Activated CD4-positive, alpha-beta T cell treated with anti-CD3 and anti-CD28 coated beads, Interleukin-2, amount 10 ng/mL, durations not matched to agents 24 days and 14 days (primary cell): ENCODE measurements at regions of chr5 and their contacts with region 1.

Region 1: DNA sequence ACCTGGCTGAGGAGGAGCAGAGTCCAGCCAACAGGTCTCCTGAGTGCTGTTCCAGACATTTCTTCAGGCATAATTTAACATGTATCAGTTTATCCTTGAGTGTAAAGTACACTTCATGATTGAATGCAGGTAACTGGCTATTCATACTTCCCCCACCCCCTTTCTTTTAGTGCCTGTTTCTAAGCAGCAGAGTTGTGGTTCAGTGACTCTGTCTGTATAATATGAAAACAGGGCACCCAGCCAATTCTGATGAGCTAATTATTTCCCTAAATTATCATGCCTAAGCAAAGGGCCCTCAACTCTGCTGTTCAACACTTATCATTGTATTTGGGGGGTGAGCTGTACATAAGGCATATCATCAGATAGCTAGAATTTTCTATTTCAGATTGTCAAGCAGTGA is 51.9 kb upstream of the ZSWIM6 start:
- DNase-seq: peak; percentile 60
- H3K4me3 Mint-ChIP-seq: no peak overlapping the region
- H3K27ac Mint-ChIP-seq: no peak overlapping the region
- H3K4me1 Mint-ChIP-seq: peaks cover 24% of the 10 kb centered on the region
- H3K27me3 Mint-ChIP-seq: no peaks in the 10 kb centered on the region

Region 2: DNA sequence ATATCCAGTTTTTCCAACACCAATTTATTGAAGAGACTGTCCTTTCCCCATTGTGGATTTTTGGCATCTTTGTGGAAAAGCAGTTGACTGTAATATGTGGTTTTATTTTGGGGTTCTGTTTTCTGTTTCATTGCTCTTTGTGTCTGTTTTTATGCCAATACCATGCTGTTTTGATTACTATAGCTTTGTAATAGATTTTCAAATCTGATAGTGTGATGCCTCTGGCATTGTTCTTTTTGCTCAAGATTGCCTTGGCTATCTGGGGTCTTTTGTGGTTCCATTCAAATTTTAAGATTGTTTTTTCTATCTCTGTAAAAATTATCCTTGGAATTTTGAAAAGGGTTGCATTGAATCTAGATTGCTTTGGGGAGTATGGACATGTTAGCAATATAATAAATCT is 235.7 kb before region 1 on chr5:
- intact Hi-C with region 1: loop called (anchors 2 kb)
- DNase-seq: no peak
- H3K4me3 Mint-ChIP-seq: no peak overlapping the region
- H3K27ac Mint-ChIP-seq: no peak overlapping the region
- H3K4me1 Mint-ChIP-seq: peaks cover 4% of the 10 kb centered on the region
- H3K27me3 Mint-ChIP-seq: no peaks in the 10 kb centered on the region

Region 3: DNA sequence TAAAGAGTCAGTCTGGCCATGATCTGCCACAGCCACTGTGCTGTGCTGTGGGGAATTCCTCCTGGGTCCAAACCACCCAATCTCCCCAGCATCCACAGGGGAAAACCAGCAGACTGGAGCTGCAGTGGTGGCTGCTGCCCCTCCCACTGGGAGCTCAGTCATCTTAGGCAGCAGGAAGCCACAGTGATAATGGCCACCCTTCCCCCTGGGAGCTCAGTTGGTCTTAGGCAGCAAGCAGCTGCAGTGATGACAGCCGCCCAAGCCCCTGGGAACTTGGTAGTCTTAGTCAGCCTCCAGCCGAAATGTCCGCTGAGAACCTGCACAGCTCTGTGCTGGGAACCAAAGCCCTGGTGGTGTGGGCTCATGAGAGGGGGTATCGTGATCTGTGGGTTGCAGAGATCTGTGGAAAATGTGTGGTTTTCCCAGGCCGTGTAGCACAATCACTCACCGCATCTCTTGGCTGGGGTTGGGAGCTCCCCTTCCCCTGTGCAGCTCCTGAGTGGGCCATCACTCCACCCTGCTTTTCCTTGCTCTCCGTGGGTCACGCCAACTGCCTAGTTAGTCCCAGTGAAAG is 79.5 kb before region 1 on chr5:
- intact Hi-C with region 1: loop called (anchors 5 kb)
- DNase-seq: no peak
- H3K4me3 Mint-ChIP-seq: no peak overlapping the region
- H3K27ac Mint-ChIP-seq: no peak overlapping the region
- H3K4me1 Mint-ChIP-seq: peaks cover 6% of the 10 kb centered on the region
- H3K27me3 Mint-ChIP-seq: peaks cover 10% of the 10 kb centered on the region

Region 4: GRCh38 chr5:61215996-61216395 is 64.2 kb before region 1 on chr5:
- intact Hi-C with region 1: no loop called
- DNase-seq: no peak
- H3K4me3 Mint-ChIP-seq: no peak overlapping the region
- H3K27ac Mint-ChIP-seq: no peak overlapping the region
- H3K4me1 Mint-ChIP-seq: no peaks in the 10 kb centered on the region
- H3K27me3 Mint-ChIP-seq: peaks cover 7% of the 10 kb centered on the region

Region 5: DNA sequence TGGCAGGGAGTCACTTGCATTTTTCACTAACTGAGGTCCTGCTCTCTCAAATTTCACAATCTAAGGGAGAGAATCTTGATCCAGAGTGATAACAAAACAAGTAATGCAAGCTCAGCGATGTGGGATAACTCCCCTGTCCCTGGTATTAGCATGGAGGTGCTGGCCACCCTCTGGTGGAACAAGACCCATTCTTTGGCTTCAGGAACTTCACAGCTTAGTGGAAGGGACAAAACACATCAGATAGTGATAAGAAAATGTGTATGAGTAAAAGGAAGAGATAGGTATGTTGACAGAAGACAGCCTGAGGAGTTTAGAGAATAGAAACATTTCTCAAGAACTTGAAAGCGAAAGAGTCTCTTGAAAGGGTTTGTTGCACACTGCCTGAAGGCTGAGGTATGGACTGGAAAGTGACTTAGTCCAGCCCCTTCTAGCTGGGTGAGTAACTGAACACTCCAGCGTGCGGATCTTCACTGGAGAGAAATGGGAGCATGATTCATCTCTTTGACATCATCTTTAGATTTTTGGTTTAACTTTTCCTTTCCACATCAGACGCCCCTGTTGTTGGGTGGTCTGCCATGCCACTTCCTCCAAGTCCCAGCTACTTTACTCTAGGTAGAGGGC is 26.4 kb after region 1 on chr5:
- intact Hi-C with region 1: loop called (anchors 2 kb)
- DNase-seq: peak; percentile 76
- H3K4me3 Mint-ChIP-seq: peak overlapping the region; percentile 9
- H3K27ac Mint-ChIP-seq: peak overlapping the region; percentile 86
- H3K4me1 Mint-ChIP-seq: peaks cover 16% of the 10 kb centered on the region
- H3K27me3 Mint-ChIP-seq: peaks cover 3% of the 10 kb centered on the region

Region 6: GRCh38 chr5:61658592-61659008 is 378.4 kb after region 1 on chr5:
- intact Hi-C with region 1: loop called (anchors 2 kb)
- DNase-seq: peak; percentile 93
- H3K4me3 Mint-ChIP-seq: no peak overlapping the region
- H3K27ac Mint-ChIP-seq: no peak overlapping the region
- H3K4me1 Mint-ChIP-seq: no peaks in the 10 kb centered on the region
- H3K27me3 Mint-ChIP-seq: peaks cover 4% of the 10 kb centered on the region